ENCODE measurements at regions of chr7 and their contacts with region 1.

Region 1: GRCh38 chr7:2104107-2104710 is 128.5 kb downstream of the MAD1L1 start:
- DNase-seq: peak; percentile 59 to 95 (median 72)
- H3K4me3 ChIP-seq: no peak overlapping the region
- H3K27ac ChIP-seq: peak overlapping the region in 2 of 5 donors; percentile 15 to 62
- H3K4me1 ChIP-seq: peaks cover 0 to 18% of the 10 kb centered on the region in 2 donors
- H3K27me3 ChIP-seq: no peaks in the 10 kb centered on the region
- CTCF ChIP-seq: peak in 5 of 6 experiments; percentile 23 to 67 (median 51)
- POLR2A ChIP-seq: peak in 1 of 2 donors; percentile 30

Region 2: DNA sequence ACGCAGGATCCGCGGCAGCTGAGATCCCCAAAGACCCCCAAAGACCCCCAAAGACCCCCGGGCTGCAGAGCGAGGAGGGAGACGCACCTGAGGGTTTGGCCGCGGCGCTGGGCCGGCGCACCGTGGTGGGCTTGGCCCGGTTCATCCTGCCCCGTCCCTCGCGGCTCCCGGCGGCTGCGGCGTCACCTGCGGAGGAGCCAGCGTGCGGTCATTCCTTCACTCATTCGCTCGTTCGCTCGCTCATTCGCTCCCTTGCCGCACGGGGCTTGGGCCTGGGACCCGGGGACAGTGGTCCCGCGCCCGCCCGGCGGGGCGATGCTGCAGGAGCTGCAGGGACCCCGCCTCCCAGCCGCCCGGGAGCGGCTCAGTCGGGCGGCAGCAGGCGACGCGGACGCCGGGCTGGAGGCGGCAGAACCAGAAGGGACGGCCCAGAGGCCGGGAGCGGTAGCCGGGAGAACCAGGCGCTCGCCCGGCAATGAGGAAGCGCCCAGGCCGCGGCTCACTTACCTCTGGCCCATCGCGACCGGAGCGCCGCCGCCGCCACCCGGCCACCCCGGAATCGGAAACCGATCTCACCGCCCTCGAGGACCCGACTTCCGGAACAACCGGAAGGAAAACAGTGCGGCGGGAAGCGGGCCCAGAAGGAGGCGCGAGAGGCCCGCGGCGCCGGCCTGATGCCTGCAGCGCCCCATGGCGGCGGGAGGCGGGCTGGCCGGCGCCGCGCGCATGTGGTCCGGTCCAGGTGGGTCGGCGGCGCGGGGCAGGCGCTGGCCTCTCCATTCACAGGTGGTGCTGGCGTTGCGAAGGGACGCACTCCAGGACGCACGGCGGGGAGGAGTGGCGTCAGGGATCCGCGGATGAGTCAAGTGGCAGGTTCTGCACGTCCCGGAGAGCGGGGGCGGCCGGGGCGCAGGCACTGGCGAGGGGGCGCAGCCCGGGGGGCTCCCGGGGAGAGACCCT is 600.1 kb before region 1 on chr7 and contains the start of gene INTS1:
- intact Hi-C with region 1: loop called in 1 of 2 experiments (anchors 5 kb)
- DNase-seq: peak; percentile 91 to 93 (median 93)
- H3K4me3 ChIP-seq: peak within 1 kb of the TSS; percentile 62 to 93 (median 88)
- H3K27ac ChIP-seq: peak within 1 kb of the TSS in 3 of 5 donors; percentile 46 to 49 (median 48)
- H3K4me1 ChIP-seq: peaks cover 6 to 22% of the 10 kb centered on the region in 2 donors
- H3K27me3 ChIP-seq: no peaks in the 10 kb centered on the region
- CTCF ChIP-seq: peak; percentile 30 to 96 (median 66)
- POLR2A ChIP-seq: peak; percentile 31 to 59
- total RNA-seq, gene INTS1: 10.6 to 110 (median 71.8) TPM

Region 3: DNA sequence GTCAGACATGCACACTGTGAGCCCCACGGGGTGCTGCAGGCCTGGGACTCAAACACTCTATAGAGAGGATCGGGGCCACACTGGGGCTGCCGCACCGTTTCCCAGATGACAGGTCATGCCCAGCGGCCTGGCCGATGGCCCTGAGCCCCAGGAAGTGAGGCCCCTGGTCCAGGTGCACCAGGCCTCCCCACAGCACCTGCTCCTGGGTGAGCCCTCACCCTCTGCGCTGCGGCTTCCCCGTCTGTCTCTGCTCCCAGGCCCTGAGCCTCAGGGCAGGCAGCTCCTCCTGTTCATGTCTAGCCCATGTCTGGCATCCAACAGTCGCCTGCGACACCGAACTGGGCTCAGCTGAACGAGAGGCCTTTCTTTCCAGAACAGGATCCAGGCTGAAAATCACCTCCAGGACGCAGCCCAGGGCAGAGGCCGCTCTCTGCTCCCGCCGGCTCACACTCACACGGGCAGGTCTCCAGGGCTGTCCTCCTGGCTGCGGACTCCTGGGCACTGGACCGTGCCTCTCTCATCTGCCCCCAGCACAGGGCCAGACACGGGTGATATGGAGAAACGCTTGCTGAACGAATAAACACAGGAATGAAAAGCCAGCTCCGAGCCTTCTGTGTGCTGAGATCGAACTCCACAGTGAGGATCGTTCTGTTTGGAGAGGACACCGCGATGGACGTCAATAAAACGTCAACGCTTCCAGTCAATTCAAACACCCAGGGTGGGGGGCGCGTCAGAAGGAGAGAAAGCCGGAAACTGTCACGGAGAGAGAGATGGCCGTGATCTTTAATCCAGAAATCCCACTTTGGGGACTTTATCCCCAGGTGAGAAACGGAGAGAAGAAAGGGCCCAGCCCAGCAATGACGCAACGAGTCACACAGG is 231.8 kb before region 1 on chr7:
- intact Hi-C with region 1: loop called in 1 of 2 experiments (anchors 10 kb)
- DNase-seq: no peak
- H3K4me3 ChIP-seq: no peak overlapping the region
- H3K27ac ChIP-seq: no peak overlapping the region
- H3K4me1 ChIP-seq: no peaks in the 10 kb centered on the region
- H3K27me3 ChIP-seq: no peaks in the 10 kb centered on the region
- CTCF ChIP-seq: no peak
- POLR2A ChIP-seq: no peak

Region 4: GRCh38 chr7:2321020-2321419 is 216.8 kb after region 1 on chr7:
- intact Hi-C with region 1: no loop called
- DNase-seq: no peak
- H3K4me3 ChIP-seq: no peak overlapping the region
- H3K27ac ChIP-seq: no peak overlapping the region
- H3K4me1 ChIP-seq: no peaks in the 10 kb centered on the region
- H3K27me3 ChIP-seq: no peaks in the 10 kb centered on the region
- CTCF ChIP-seq: no peak
- POLR2A ChIP-seq: no peak

Measured in adrenal gland (tissue), 19 donors.